AG04449 (cell line): ENCODE measurements at regions of chr17 and their contacts with region 1.

Region 1: GRCh38 chr17:63881876-63882601 is at the start of gene GH2:
- DNase-seq: no peak
- H3K4me3 ChIP-seq: no peak within 1 kb of the TSS
- CTCF ChIP-seq: peak; percentile 58

Region 2: GRCh38 chr17:63751806-63752205 is 130.2 kb before region 1 on chr17:
- CTCF ChIA-PET with region 1: no interaction called
- POLR2A ChIA-PET with region 1: no interaction called
- DNase-seq: no peak
- H3K4me3 ChIP-seq: no peak overlapping the region
- CTCF ChIP-seq: no peak

Region 3: DNA sequence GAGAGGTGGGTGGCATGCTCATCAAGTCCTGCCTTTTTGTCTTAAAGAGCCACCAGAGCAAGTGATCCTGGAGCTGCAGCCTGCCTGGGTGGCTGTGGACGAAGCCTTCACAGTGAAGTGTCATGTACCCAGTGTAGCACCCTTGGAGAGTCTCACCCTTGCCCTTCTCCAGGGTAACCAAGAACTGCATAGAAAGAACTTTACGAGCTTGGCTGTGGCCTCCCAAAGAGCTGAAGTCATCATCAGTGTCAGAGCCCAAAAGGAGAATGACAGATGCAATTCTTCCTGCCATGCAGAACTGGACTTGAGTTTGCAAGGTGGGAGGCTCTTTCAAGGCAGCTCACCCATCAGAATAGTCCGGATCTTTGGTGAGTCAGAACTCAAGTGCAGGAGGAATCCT is 22.8 kb before region 1 on chr17:
- CTCF ChIA-PET with region 1: interaction called, 12 read pairs
- POLR2A ChIA-PET with region 1: no interaction called
- DNase-seq: no peak
- H3K4me3 ChIP-seq: no peak overlapping the region
- CTCF ChIP-seq: no peak

Region 4: GRCh38 chr17:63904316-63904715 is 22.3 kb after region 1 on chr17:
- CTCF ChIA-PET with region 1: interaction called, 17 read pairs
- POLR2A ChIA-PET with region 1: no interaction called
- DNase-seq: no peak
- H3K4me3 ChIP-seq: no peak overlapping the region
- CTCF ChIP-seq: no peak